A549 (cell line): ENCODE measurements at regions of chr10 and their contacts with region 1.

Region 1: GRCh38 chr10:33330543-33331378 is 3.7 kb downstream of the NRP1 start:
- DNase-seq: peak; percentile 60 to 87
- ATAC-seq: peak in 1 of 2 experiments; percentile 36; a peak in 3 of 6 replicates
- H3K4me3 ChIP-seq: peak overlapping the region; percentile 85
- H3K27ac ChIP-seq: peak overlapping the region; percentile 99
- H3K4me1 ChIP-seq: peaks cover 46% of the 10 kb centered on the region
- CTCF ChIP-seq: peak; percentile 92
- EP300 ChIP-seq: no peak
- POLR2A ChIP-seq: no peak
- RAD21 ChIP-seq: peak; percentile 89 to 92

Region 2: DNA sequence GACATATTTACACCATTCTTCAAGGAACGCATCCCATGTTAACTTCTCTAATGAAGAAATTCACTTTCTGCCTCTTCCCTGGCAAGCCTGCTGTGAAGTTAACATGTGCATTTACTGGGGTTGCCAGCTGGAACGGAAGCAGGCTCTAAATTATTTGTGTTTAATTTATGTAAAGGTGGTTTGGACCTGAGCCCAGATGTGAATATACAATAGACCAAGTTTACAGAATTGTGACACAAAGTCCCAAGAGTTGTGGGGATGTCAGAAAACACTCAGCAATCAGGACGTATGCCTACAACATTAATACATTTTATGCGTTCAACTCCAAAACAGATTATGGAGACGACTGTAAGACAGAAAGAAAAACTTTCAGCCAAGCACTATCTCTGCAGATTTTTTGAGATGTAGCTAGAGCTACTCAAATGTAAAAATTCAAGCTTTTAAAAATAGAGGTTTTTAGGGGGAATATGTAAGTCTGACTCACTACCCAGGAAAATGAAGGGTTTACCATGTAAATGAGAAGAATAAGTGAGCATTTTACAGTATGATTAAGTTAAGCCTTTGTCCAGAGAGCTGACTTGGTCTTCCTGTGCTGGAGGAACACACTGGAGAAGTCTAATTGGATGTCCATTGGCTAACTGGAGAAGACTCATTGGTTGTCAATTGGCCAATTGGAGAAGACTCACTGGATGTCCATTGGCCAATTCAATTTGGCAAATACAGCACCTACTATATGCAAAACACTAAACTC is 15.8 kb before region 1 on chr10:
- CTCF ChIA-PET with region 1: interaction called, 13 read pairs
- POLR2A ChIA-PET with region 1: no interaction called
- DNase-seq: no peak
- ATAC-seq: no peak
- H3K4me3 ChIP-seq: no peak overlapping the region
- H3K27ac ChIP-seq: peak overlapping the region; percentile 40 to 62; a peak in 4 of 6 replicates
- H3K4me1 ChIP-seq: peaks cover 57% of the 10 kb centered on the region
- CTCF ChIP-seq: no peak
- EP300 ChIP-seq: no peak
- POLR2A ChIP-seq: no peak
- RAD21 ChIP-seq: no peak

Region 3: GRCh38 chr10:33365871-33366411 is 35.2 kb after region 1 on chr10:
- CTCF ChIA-PET with region 1: interaction called, 4 read pairs
- POLR2A ChIA-PET with region 1: interaction called, 30 read pairs
- DNase-seq: peak; percentile 21 to 63
- ATAC-seq: peak; percentile 89 to 97
- H3K4me3 ChIP-seq: no peak overlapping the region
- H3K27ac ChIP-seq: peak overlapping the region; percentile 80 to 88
- H3K4me1 ChIP-seq: peaks cover 14% of the 10 kb centered on the region; the same call in 2 of the 3 replicates
- CTCF ChIP-seq: no peak
- EP300 ChIP-seq: peak; percentile 86 to 90; a peak in 3 of 5 replicates
- POLR2A ChIP-seq: no peak
- RAD21 ChIP-seq: peak in 1 of 2 experiments; percentile 56; a peak in 3 of 5 replicates